ENCODE measurements at regions of chr4 and their contacts with region 1.

Region 1: DNA sequence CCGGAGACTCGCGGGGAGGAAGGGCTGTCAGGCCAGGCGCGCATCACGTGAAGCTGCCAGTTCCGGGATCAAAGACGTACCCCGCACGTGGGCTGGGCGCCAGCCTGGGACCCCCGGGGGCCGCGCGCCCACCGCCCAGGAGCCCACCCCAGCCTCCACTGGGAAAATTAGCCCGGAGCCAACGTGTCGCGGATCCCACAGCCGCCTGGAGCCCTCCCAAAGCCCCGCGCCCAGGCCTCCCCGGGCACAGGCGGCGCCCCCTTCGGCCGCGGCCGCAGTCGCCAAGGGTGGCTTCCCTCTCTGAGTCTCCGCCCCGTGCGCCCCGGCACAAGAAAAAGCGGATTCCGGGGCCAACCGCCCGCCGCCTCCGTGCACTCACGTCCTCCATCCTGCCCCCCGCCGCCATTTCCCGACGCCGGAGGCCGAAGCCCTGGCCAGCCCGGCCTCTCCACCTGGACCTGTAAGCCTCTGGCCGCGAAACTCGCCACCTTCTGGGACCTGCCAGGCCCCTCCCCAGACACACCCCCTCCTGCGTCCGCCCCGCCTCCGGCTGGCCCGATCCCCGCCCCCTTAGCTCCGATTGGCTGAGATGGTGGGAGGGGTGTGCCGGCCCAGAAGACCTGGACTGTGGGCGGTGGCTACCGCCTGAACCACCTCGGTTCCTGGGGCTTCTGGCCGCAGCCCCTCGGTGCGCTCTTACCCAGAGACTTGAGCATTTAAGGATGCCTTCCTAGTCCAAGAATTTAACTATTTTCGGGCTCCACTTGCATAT is at the start of gene TMEM192:
- DNase-seq: peak; percentile 83
- ATAC-seq: peak; percentile 93
- H3K4me3 ChIP-seq: peak within 1 kb of the TSS; percentile 65 to 78
- H3K27ac ChIP-seq: peak within 1 kb of the TSS; percentile 74
- H3K4me1 ChIP-seq: peaks cover 8 to 14% of the 10 kb centered on the region in 2 experiments; a peak in 3 of 4 replicates
- H3K27me3 ChIP-seq: no peaks in the 10 kb centered on the region
- CTCF ChIP-seq: peak in 2 of 3 experiments; percentile 39 to 53; a peak in 4 of 6 replicates
- POLR2A ChIP-seq: no peak
- RAD21 ChIP-seq: no peak
- total RNA-seq, gene TMEM192: 13.1 TPM

Region 2: GRCh38 chr4:165343353-165344191 is 231.0 kb after region 1 on chr4:
- CTCF ChIA-PET with region 1: interaction called, 28 read pairs
- POLR2A ChIA-PET with region 1: no interaction called
- RAD21 ChIA-PET with region 1: no interaction called
- intact Hi-C with region 1: no loop called
- DNase-seq: no peak
- ATAC-seq: peak; percentile 78
- H3K4me3 ChIP-seq: no peak overlapping the region
- H3K27ac ChIP-seq: no peak overlapping the region
- H3K4me1 ChIP-seq: no peaks in the 10 kb centered on the region
- H3K27me3 ChIP-seq: no peaks in the 10 kb centered on the region
- CTCF ChIP-seq: peak; percentile 53 to 65 (median 59); a peak in 4 of 6 replicates
- POLR2A ChIP-seq: no peak
- RAD21 ChIP-seq: peak; percentile 86